Heart left ventricle (tissue), 16 donors: ENCODE measurements at regions of chr3 and their contacts with region 1.

Region 1: GRCh38 chr3:73624821-73625665 is at the start of gene PDZRN3:
- DNase-seq: peak; percentile 65 to 81 (median 75)
- ATAC-seq: peak; percentile 25 to 58 (median 56)
- H3K4me3 ChIP-seq: peak within 1 kb of the TSS; percentile 39 to 86 (median 63)
- H3K27ac ChIP-seq: peak within 1 kb of the TSS; percentile 75 to 95 (median 90)
- H3K4me1 ChIP-seq: peaks cover 0 to 46% (median 15%) of the 10 kb centered on the region in 12 donors
- H3K27me3 ChIP-seq: peaks cover 0 to 11% (median 0%) of the 10 kb centered on the region in 9 donors
- CTCF ChIP-seq: no peak
- POLR2A ChIP-seq: peak in 1 of 2 donors; percentile 87
- total RNA-seq, gene PDZRN3: 48.9 to 163 (median 83.1) TPM

Region 2: GRCh38 chr3:73114711-73115110 is 510.3 kb before region 1 on chr3:
- intact Hi-C with region 1: no loop called
- DNase-seq: no peak
- ATAC-seq: no peak
- H3K4me3 ChIP-seq: no peak overlapping the region
- H3K27ac ChIP-seq: no peak overlapping the region
- H3K4me1 ChIP-seq: peaks cover 0 to 4% (median 0%) of the 10 kb centered on the region in 12 donors
- H3K27me3 ChIP-seq: no peaks in the 10 kb centered on the region
- CTCF ChIP-seq: no peak
- POLR2A ChIP-seq: no peak

Region 3: GRCh38 chr3:73572368-73572767 is 52.7 kb before region 1 on chr3:
- intact Hi-C with region 1: loop called in 1 of 10 experiments (anchors 5 kb)
- DNase-seq: no peak
- ATAC-seq: no peak
- H3K4me3 ChIP-seq: no peak overlapping the region
- H3K27ac ChIP-seq: peak overlapping the region in 1 of 12 donors; percentile 46
- H3K4me1 ChIP-seq: peaks cover 0 to 79% (median 7%) of the 10 kb centered on the region in 12 donors
- H3K27me3 ChIP-seq: no peaks in the 10 kb centered on the region
- CTCF ChIP-seq: no peak
- POLR2A ChIP-seq: no peak

Region 4: DNA sequence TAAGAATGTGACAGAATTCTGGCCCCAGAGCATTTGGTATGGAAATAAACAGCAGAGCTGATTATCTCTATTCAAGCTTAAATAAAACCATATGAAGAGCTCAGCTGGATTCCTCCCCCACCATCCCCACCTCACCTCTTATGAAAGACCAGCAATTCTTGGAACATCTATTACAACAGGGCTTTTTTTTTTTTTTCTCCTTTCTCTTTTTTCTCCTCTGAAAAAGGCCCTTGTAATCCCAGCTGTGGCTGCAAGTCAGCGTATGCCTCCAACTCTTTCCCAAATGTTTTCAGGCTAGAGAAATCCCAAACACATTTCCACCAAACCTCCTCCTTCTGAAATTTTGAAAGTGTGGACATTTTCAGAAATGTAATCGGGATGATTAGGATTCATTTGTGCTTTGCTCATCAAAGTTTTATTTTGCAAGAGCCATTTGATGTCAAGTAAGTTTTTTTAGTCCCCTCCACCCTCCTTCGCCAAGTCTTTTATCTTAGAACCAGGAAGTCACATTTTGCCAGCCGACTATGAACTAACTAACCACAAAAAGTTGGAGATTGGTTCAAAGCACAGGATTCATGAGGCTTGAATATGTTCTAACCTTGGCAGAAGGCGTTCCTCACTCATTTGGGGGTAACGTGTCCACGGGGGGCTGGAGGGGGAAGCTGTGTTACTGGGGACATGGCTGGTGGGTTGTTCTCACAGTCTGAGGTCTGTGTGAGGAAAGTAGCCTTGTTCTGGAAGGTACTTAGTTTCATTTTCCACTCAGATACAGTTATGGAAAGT is 141.7 kb after region 1 on chr3:
- intact Hi-C with region 1: loop called in 1 of 10 experiments (anchors 10 kb)
- DNase-seq: peak in 1 of 5 donors; percentile 27
- ATAC-seq: peak; percentile 42 to 69 (median 63)
- H3K4me3 ChIP-seq: peak overlapping the region in 7 of 12 donors; percentile 8 to 37 (median 24)
- H3K27ac ChIP-seq: peak overlapping the region in 11 of 12 donors; percentile 33 to 75 (median 59)
- H3K4me1 ChIP-seq: peaks cover 0 to 33% (median 8%) of the 10 kb centered on the region in 12 donors
- H3K27me3 ChIP-seq: no peaks in the 10 kb centered on the region
- CTCF ChIP-seq: no peak
- POLR2A ChIP-seq: no peak

Region 5: DNA sequence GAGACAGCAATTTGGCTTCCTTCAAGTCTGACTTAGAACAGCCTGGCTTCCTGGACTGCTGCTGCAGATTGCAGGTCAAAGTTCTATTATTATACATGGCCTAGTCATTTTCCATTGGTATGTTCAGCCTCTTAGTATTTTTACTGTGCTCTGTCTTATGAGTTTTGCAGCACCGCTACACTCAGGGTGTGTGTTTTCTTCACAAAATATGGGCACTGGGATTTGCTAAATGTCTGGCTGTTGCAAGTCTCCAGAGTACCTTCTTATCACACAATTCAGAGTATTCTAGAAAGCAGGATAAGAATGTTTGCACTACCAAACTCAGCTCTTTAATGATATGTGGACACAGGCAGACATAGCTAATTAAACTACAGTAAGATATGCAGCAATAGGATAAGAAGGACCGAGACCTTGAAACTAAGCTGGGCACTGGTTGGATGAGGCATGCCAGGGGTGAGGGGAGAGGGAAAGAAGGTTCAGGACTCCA is 202.7 kb after region 1 on chr3:
- intact Hi-C with region 1: loop called in 3 of 10 experiments (anchors 5 to 10 kb)
- DNase-seq: peak in 1 of 5 donors; percentile 31
- ATAC-seq: peak; percentile 83 to 89 (median 86)
- H3K4me3 ChIP-seq: no peak overlapping the region
- H3K27ac ChIP-seq: peak overlapping the region; percentile 24 to 87 (median 74)
- H3K4me1 ChIP-seq: peaks cover 0 to 28% (median 16%) of the 10 kb centered on the region in 12 donors
- H3K27me3 ChIP-seq: no peaks in the 10 kb centered on the region
- CTCF ChIP-seq: no peak
- POLR2A ChIP-seq: no peak